ENCODE measurements at regions of chr11 and their contacts with region 1.

Region 1: DNA sequence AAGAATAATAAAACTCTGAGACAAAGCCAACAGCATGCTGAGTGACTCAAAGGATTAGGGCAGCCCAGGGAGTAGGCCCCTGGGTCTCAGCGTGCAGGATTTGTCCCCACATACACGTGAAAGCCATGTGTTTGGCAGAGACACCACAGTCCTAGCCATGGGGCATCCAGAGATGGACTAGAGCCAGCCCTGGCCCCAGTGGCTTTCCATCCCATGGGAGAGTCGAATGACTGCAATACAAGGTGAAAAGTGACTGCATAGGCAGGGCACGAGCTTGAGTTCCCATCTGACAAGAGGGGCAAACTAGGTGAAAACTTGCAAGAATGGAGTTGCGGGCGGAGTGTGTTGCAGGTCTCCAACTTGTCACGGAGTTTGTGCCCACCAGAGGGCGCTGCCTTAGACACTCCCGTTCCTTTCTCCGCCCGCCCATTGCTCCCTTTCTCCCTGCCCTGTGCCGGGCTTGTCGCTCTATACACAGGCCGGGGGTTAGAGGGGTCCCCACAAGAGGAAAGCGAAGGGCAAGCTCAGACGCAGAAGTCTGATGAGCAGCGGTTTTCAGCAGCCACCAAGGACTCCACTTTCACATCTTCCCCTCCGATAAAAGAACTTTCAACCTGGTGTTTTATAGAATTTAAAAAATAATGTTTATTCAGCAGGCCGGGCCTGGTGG is 24.2 kb downstream of the TSKU start:
- DNase-seq: peak in 1 of 2 donors; percentile 92
- H3K4me3 ChIP-seq: peak overlapping the region in 1 of 2 donors; percentile 41
- H3K27ac ChIP-seq: peak overlapping the region; percentile 54 to 58
- H3K4me1 ChIP-seq: peaks cover 0 to 10% of the 10 kb centered on the region in 2 donors
- H3K27me3 ChIP-seq: no peaks in the 10 kb centered on the region
- CTCF ChIP-seq: peak; percentile 77 to 80 (median 79)

Region 2: DNA sequence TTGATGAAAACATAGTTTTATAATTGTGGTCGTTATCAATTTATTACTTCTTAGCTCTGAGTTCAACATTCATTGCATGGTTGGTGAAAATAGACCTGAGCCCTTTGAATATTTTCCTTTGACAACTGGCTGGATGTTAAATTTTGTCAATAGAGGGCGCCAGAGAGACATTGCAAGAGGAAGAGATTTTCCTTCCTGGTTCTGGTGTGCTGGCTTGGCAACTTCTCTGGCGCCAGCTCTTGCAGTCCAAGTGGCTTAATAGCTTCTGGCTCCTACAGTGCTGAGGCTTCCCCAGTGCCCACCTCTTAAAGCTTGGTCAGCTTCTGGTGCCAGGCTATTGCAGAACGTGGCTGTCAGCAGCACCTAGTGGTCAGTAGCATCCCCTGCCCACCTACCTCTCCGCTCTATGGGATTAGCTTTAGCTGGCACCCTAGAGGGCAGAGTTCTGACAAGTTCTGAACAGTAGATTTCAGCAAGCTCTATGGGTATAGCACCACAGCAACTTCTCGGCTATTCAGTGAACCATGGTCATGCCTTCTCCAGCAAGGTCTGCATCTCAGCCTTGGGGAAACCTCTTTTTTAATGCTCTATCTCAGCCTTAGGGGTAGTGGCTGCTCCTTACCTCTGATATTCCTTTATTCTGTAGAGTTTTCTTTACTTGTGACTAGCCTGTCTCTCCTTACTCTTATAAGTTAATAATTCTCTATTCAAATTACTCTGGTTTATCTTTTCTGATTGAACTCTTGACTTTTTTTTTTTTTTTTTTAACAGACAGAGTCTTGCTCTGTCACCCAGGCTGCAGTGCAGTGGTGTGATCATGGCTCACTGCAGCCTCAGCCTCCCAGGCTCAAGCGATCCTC is 112.8 kb after region 1 on chr11:
- intact Hi-C with region 1: loop called (anchors 1 kb)
- DNase-seq: peak; percentile 27 to 88
- H3K4me3 ChIP-seq: no peak overlapping the region
- H3K27ac ChIP-seq: no peak overlapping the region
- H3K4me1 ChIP-seq: no peaks in the 10 kb centered on the region
- H3K27me3 ChIP-seq: no peaks in the 10 kb centered on the region
- CTCF ChIP-seq: peak; percentile 63 to 93 (median 83)

Region 3: DNA sequence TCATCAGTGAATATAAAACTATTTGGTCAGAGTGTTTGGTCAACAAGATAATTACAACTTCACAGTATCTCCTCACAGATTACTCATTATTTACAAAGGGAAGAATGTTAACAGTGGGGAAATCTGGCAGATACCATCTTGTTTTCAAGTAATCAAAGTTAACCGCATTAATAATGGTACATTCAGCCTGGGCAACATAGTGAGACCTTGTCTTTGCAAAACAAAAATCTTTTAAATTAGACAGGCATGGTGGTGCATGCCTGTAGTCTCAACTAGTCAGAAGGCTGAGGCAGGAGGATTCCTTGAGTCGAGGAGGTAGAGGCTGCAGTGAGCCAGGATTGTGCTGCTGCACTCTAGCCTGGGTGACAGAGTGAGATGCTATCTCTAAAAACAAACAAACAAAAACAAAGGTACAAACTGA is 131.9 kb after region 1 on chr11:
- intact Hi-C with region 1: no loop called
- DNase-seq: no peak
- H3K4me3 ChIP-seq: no peak overlapping the region
- H3K27ac ChIP-seq: no peak overlapping the region
- H3K4me1 ChIP-seq: no peaks in the 10 kb centered on the region
- H3K27me3 ChIP-seq: no peaks in the 10 kb centered on the region
- CTCF ChIP-seq: no peak